GM23248 (cell line): ENCODE measurements at regions of chr16 and their contacts with region 1.

Region 1: GRCh38 chr16:86519649-86520316 is 9.5 kb downstream of the FOXF1 start:
- DNase-seq: peak; percentile 72
- H3K4me3 ChIP-seq: peak overlapping the region; percentile 52
- H3K27ac ChIP-seq: no peak overlapping the region
- H3K4me1 ChIP-seq: no peaks in the 10 kb centered on the region
- H3K27me3 ChIP-seq: peaks cover 36% of the 10 kb centered on the region

Region 2: DNA sequence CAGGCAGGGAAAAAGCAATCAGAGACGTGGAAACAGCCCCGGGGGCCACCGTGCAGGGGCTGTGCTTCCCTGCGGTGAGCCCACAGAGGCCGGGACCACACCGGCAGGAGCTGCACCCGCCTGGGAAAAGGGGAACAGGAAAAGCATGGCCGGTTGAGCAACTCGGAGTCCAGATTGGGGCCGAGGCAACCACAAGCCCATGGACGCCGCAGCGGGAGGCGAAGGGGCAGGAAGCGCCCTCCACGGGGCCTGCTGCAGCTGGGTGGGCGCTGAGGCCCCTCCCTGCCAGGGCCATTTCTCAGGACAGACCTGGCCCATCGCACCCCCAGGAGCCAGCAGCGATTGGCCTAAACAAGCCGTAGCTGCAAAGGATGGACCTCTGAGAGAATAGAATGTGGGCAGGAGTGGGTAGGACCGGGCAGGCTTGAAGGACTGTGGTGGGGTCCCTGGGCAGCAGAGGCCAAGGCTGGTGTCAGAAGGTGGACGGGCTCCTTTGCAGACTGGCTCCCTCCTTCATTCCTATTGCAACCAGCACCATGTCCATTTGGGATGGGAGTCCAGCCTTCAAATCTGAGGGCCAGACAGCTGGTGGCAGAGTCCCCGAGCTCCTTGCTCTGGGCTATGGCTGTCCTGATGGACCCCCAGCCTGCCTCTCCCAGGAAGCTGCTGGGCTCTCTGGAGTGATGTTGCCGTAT is 689.9 kb before region 1 on chr16:
- in situ Hi-C with region 1: loop called (anchors 25 kb)
- DNase-seq: no peak
- H3K4me3 ChIP-seq: no peak overlapping the region
- H3K27ac ChIP-seq: no peak overlapping the region
- H3K4me1 ChIP-seq: no peaks in the 10 kb centered on the region
- H3K27me3 ChIP-seq: peaks cover 31% of the 10 kb centered on the region

Region 3: GRCh38 chr16:86018487-86018886 is 501.3 kb before region 1 on chr16:
- in situ Hi-C with region 1: no loop called
- DNase-seq: peak; percentile 34
- H3K4me3 ChIP-seq: no peak overlapping the region
- H3K27ac ChIP-seq: no peak overlapping the region
- H3K4me1 ChIP-seq: no peaks in the 10 kb centered on the region
- H3K27me3 ChIP-seq: peaks cover 41% of the 10 kb centered on the region

Region 4: DNA sequence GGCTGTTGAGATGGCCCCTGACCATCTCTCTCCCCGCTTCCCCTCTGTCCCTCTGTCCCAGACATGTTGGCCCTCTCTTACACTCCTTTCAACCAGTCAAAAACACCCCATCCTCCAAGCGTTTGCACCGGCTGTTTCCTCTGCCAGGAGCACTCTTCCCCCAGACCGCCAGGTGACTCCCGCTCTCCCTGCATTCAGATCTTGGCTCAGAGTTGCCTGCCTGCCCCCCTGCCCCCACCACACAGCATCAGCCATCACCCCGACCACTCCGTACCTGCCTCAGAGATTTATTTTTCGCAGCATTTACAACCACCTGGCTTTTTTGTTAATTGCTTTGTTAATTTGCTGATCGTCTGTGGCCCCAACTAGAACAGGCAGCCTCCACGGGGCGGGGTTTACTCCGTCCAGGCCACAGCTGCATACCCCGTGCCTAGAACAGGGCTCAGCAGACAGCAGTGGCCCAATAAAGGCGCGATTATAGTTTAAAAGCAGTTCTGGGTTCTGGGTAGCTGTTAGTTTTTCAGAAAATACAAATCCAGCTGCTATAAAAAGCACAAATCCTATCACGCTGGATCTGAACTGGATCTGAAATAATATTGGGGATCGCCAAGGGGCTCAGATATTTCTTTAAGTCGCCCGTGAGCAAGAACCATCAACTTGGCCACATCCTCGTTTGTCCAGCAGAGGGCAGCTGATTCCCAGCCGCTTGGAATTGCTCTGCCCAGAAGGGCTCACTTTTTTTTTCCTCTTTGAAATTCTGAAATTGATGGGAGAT is 447.3 kb before region 1 on chr16:
- in situ Hi-C with region 1: loop called (anchors 5 kb)
- DNase-seq: peak; percentile 79
- H3K4me3 ChIP-seq: no peak overlapping the region
- H3K27ac ChIP-seq: no peak overlapping the region
- H3K4me1 ChIP-seq: no peaks in the 10 kb centered on the region
- H3K27me3 ChIP-seq: peaks cover 26% of the 10 kb centered on the region

Region 5: DNA sequence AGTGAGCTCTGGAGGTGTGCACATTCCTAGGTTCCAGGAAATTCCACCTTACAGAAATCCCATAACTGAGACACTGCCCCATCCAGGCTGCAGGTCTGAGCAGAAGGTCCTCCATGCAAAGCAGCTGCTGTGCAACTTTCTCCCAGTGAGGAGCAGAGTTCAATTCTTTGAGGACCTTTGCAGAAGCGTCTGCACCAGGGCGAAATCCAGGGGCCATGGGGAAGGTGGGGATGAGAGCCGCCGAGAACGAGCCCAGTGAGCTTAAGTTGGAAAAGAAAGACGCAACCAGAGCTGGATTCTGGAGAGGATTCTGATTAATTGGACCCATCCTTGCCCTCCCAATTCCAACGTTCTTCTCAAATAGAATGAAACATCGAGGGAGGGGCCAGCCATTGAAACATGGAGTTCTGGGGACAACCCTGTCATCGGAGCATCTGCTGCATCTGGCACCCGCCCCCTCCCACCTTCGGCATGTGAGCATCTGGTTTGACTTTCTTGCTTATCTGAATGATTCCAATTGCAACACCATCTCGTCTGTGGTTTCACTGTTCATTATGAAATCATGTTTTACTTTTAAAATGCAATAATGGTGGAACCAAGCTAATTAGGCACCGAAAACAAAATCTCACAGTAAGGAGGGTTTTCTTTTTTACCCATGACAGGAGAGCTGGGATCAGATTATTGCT is 200.1 kb before region 1 on chr16:
- in situ Hi-C with region 1: no loop called
- DNase-seq: peak; percentile 38
- H3K4me3 ChIP-seq: peak overlapping the region; percentile 40
- H3K27ac ChIP-seq: no peak overlapping the region
- H3K4me1 ChIP-seq: peaks cover 10% of the 10 kb centered on the region
- H3K27me3 ChIP-seq: peaks cover 45% of the 10 kb centered on the region

Region 6: GRCh38 chr16:86874141-86874540 is 354.4 kb after region 1 on chr16:
- in situ Hi-C with region 1: no loop called
- DNase-seq: peak; percentile 41
- H3K4me3 ChIP-seq: no peak overlapping the region
- H3K27ac ChIP-seq: no peak overlapping the region
- H3K4me1 ChIP-seq: no peaks in the 10 kb centered on the region
- H3K27me3 ChIP-seq: peaks cover 61% of the 10 kb centered on the region